ENCODE measurements at regions of chr6 and their contacts with region 1.

Region 1: DNA sequence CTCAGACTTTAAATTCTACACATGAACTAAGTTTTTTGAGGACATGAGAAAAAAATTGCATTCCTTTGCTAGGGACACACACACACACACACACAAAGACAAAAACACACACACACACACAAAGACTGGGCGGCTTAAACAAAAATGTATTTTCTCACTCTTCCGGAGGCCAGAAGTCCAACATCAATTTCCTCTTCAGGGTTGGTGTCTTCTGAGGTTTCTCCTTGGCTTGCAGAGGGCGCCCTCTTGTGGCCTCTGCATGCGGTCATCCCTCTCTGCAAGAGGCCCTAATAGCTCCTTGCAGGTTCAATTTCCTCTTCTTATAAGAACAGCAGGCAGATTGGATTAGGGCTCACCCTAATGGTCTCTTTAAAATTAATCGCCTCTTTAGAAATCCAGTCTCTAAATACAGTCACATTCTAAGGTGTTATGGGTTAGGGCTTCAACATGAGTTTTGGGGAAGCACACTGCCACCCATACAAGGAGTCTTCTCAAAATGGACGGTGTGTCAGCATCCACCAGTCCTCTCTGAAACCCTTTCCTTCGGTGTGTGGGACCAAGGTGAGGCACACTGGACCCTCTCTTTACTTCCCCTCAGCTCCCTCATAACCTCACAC is 61.4 kb downstream of the GPR6 start:
- DNase-seq: peak; percentile 73 to 77 (median 75)
- H3K4me3 ChIP-seq: peak overlapping the region; percentile 49 to 57
- H3K4me3 Mint-ChIP-seq: peak overlapping the region; percentile 88 to 96 (median 94)
- H3K27ac ChIP-seq: peak overlapping the region; percentile 34
- H3K27ac Mint-ChIP-seq: peak overlapping the region; percentile 59 to 94 (median 88)
- H3K4me1 ChIP-seq: peaks cover 11% of the 10 kb centered on the region
- H3K4me1 Mint-ChIP-seq: peaks cover 11 to 15% (median 13%) of the 10 kb centered on the region in 4 donors
- H3K27me3 ChIP-seq: no peaks in the 10 kb centered on the region
- H3K27me3 Mint-ChIP-seq: no peaks in the 10 kb centered on the region

Region 2: GRCh38 chr6:109197061-109197460 is 842.4 kb before region 1 on chr6:
- CTCF ChIA-PET with region 1: interaction called, 13 read pairs
- POLR2A ChIA-PET with region 1: no interaction called
- intact Hi-C with region 1: no loop called
- DNase-seq: no peak
- H3K4me3 ChIP-seq: no peak overlapping the region
- H3K4me3 Mint-ChIP-seq: no peak overlapping the region
- H3K27ac ChIP-seq: no peak overlapping the region
- H3K27ac Mint-ChIP-seq: no peak overlapping the region
- H3K4me1 ChIP-seq: no peaks in the 10 kb centered on the region
- H3K4me1 Mint-ChIP-seq: no peaks in the 10 kb centered on the region
- H3K27me3 ChIP-seq: no peaks in the 10 kb centered on the region
- H3K27me3 Mint-ChIP-seq: peaks cover 0 to 3% of the 10 kb centered on the region in 2 donors

Region 3: DNA sequence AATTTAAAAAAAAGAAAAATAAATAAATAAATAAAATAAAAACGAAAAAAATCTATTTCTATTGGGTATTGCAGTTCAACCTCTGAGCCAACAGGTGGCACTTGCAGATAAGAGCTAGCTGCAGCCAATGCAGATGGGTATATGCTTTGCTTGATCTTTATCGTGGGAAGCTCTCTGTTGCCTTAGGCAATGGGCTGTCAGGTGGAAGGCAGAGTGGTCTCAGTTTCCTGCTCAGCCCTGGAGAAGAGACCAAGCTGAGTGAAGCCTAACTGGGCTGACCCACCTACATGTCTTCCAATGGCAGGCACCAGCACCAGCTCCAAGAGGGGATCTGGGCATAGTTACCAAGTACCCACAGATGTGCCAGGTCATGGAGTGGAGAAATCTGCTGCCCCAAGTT is 443.5 kb before region 1 on chr6:
- CTCF ChIA-PET with region 1: no interaction called
- POLR2A ChIA-PET with region 1: interaction called, 3 read pairs
- intact Hi-C with region 1: loop called (anchors 1 kb)
- DNase-seq: peak in 1 of 5 donors; percentile 5
- H3K4me3 ChIP-seq: no peak overlapping the region
- H3K4me3 Mint-ChIP-seq: no peak overlapping the region
- H3K27ac ChIP-seq: no peak overlapping the region
- H3K27ac Mint-ChIP-seq: no peak overlapping the region
- H3K4me1 ChIP-seq: peaks cover under 1% of the 10 kb centered on the region
- H3K4me1 Mint-ChIP-seq: peaks cover under 1 to 4% (median 1%) of the 10 kb centered on the region in 4 donors
- H3K27me3 ChIP-seq: no peaks in the 10 kb centered on the region
- H3K27me3 Mint-ChIP-seq: no peaks in the 10 kb centered on the region

Region 4: GRCh38 chr6:110013386-110013785 is 26.1 kb before region 1 on chr6:
- CTCF ChIA-PET with region 1: interaction called, 35 read pairs
- POLR2A ChIA-PET with region 1: no interaction called
- intact Hi-C with region 1: no loop called
- DNase-seq: no peak
- H3K4me3 ChIP-seq: no peak overlapping the region
- H3K4me3 Mint-ChIP-seq: no peak overlapping the region
- H3K27ac ChIP-seq: no peak overlapping the region
- H3K27ac Mint-ChIP-seq: no peak overlapping the region
- H3K4me1 ChIP-seq: no peaks in the 10 kb centered on the region
- H3K4me1 Mint-ChIP-seq: no peaks in the 10 kb centered on the region
- H3K27me3 ChIP-seq: no peaks in the 10 kb centered on the region
- H3K27me3 Mint-ChIP-seq: peaks cover 6 to 12% of the 10 kb centered on the region in 2 donors

Region 5: GRCh38 chr6:110053395-110054240 is 14.1 kb after region 1 on chr6:
- CTCF ChIA-PET with region 1: interaction called, 40 read pairs
- POLR2A ChIA-PET with region 1: interaction called, 4 read pairs
- intact Hi-C with region 1: no loop called
- DNase-seq: peak in 4 of 5 donors; percentile 5 to 17 (median 8)
- H3K4me3 ChIP-seq: no peak overlapping the region
- H3K4me3 Mint-ChIP-seq: no peak overlapping the region
- H3K27ac ChIP-seq: no peak overlapping the region
- H3K27ac Mint-ChIP-seq: no peak overlapping the region
- H3K4me1 ChIP-seq: no peaks in the 10 kb centered on the region
- H3K4me1 Mint-ChIP-seq: peaks cover 0 to 2% (median 0%) of the 10 kb centered on the region in 4 donors
- H3K27me3 ChIP-seq: no peaks in the 10 kb centered on the region
- H3K27me3 Mint-ChIP-seq: peaks cover 5 to 13% of the 10 kb centered on the region in 2 donors

Region 6: DNA sequence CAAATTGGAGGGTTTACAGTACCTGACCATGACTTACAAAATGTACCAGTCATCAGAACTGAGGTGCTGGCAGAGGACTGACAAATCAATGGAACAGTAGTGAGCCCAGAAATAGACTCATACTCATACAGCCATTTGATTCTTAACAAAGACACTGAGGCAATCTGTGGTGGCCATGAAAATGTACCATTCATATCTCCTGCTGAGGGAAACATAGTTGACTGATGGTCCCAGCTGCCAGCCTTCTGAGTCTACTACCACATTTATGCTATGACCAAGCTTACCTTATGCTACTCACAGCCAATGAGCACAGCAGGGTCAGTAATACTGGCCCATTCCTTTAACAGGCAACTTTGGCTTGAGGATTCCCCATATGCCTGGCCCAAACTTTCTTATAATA is 51.4 kb after region 1 on chr6:
- CTCF ChIA-PET with region 1: no interaction called
- POLR2A ChIA-PET with region 1: no interaction called
- intact Hi-C with region 1: no loop called
- DNase-seq: no peak
- H3K4me3 ChIP-seq: no peak overlapping the region
- H3K4me3 Mint-ChIP-seq: no peak overlapping the region
- H3K27ac ChIP-seq: no peak overlapping the region
- H3K27ac Mint-ChIP-seq: no peak overlapping the region
- H3K4me1 ChIP-seq: no peaks in the 10 kb centered on the region
- H3K4me1 Mint-ChIP-seq: no peaks in the 10 kb centered on the region
- H3K27me3 ChIP-seq: no peaks in the 10 kb centered on the region
- H3K27me3 Mint-ChIP-seq: peaks cover 5 to 8% of the 10 kb centered on the region in 2 donors

Region 7: GRCh38 chr6:111973118-111973761 is 1933.8 kb after region 1 on chr6:
- CTCF ChIA-PET with region 1: no interaction called
- POLR2A ChIA-PET with region 1: no interaction called
- intact Hi-C with region 1: no loop called
- DNase-seq: peak; percentile 63 to 91 (median 78)
- H3K4me3 ChIP-seq: peak overlapping the region in 1 of 2 donors; percentile 6
- H3K4me3 Mint-ChIP-seq: peak overlapping the region; percentile 61 to 79 (median 66)
- H3K27ac ChIP-seq: peak overlapping the region; percentile 75
- H3K27ac Mint-ChIP-seq: peak overlapping the region; percentile 89 to 99 (median 95)
- H3K4me1 ChIP-seq: peaks cover 29% of the 10 kb centered on the region
- H3K4me1 Mint-ChIP-seq: peaks cover 30 to 60% (median 48%) of the 10 kb centered on the region in 4 donors
- H3K27me3 ChIP-seq: no peaks in the 10 kb centered on the region
- H3K27me3 Mint-ChIP-seq: no peaks in the 10 kb centered on the region